CD4-positive, alpha-beta memory T cell (primary cell): ENCODE measurements at regions of chr20 and their contacts with region 1.

Region 1: DNA sequence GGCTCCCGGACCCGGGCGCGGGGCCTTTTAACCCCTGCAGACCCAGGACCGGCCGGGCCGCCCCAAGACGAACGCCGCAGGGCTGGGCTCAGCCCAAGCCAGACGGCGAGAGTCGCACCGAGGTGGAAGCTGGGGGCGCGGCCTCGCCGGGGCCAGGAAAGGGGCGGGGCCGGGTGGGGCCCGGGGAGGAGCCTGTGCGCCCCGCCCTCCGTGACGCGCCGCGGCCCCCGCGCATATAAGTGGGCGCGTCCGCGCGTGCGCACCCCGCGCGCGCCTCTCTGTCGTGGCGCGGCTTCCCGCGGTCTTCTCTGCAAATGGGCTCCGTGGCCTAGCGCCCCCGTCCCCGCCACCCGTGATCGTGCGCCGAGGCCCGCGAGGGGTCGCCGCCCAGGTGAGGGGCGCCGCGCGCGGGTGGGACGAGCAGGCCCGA is at the start of gene PPDPF:
- DNase-seq: peak; percentile 80 to 89 (median 83)
- H3K4me3 ChIP-seq: peak within 1 kb of the TSS; percentile 77 to 84
- H3K4me3 Mint-ChIP-seq: peak within 1 kb of the TSS; percentile 80 to 84 (median 82)
- H3K27ac ChIP-seq: peak within 1 kb of the TSS; percentile 74
- H3K27ac Mint-ChIP-seq: peak within 1 kb of the TSS; percentile 57 to 82 (median 74)
- H3K4me1 ChIP-seq: peaks cover 23% of the 10 kb centered on the region
- H3K4me1 Mint-ChIP-seq: peaks cover 6 to 28% (median 11%) of the 10 kb centered on the region in 4 donors
- H3K27me3 ChIP-seq: no peaks in the 10 kb centered on the region
- H3K27me3 Mint-ChIP-seq: no peaks in the 10 kb centered on the region
- total RNA-seq, gene PPDPF: 208 to 229 TPM

Region 2: DNA sequence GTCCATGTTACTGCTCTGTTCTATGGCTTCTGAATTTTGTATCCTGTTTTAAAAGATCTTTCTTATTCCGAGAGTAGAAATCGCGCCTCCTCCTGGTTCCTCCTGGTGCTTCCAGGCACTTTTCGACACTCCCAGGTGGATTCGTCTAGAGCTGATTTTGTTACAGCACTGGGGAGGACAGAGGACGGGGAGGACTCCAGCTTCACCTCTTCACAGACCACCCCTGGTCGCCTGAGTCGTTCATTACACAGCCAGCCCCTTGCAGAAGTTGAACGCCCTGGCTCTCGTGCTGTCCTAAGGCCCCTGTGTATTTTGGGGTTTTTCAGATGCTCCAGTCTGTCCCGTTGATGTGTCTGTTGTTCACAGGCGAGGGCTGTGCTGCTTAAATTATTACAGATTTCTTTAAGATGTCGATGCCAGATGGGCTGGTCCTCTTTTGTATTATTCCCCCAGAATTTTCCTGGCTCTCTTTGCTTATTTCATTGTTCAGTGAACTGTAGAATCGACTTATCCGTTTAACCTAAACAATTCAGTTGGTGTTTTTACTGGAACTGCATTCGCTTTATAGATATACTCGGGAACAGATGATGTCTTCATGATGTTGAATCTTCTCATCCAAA is 197.0 kb before region 1 on chr20:
- CTCF ChIA-PET with region 1: no interaction called
- POLR2A ChIA-PET with region 1: no interaction called
- intact Hi-C with region 1: no loop called
- DNase-seq: no peak
- H3K4me3 ChIP-seq: no peak overlapping the region
- H3K4me3 Mint-ChIP-seq: no peak overlapping the region
- H3K27ac ChIP-seq: no peak overlapping the region
- H3K27ac Mint-ChIP-seq: peak overlapping the region in 2 of 7 donors; percentile 29 to 31
- H3K4me1 ChIP-seq: peaks cover 13% of the 10 kb centered on the region
- H3K4me1 Mint-ChIP-seq: peaks cover 0 to 5% (median 1%) of the 10 kb centered on the region in 4 donors
- H3K27me3 ChIP-seq: no peaks in the 10 kb centered on the region
- H3K27me3 Mint-ChIP-seq: peaks cover 3% of the 10 kb centered on the region in 2 donors

Region 3: GRCh38 chr20:63495741-63496595 is 24.6 kb before region 1 on chr20:
- CTCF ChIA-PET with region 1: interaction called, 21 read pairs
- POLR2A ChIA-PET with region 1: interaction called, 27 read pairs
- intact Hi-C with region 1: loop called (anchors 1 kb)
- DNase-seq: peak; percentile 63 to 72 (median 68)
- H3K4me3 ChIP-seq: peak overlapping the region in 1 of 2 donors; percentile 43
- H3K4me3 Mint-ChIP-seq: peak overlapping the region in 7 of 8 donors; percentile 48 to 83 (median 71)
- H3K27ac ChIP-seq: no peak overlapping the region
- H3K27ac Mint-ChIP-seq: no peak overlapping the region
- H3K4me1 ChIP-seq: peaks cover 18% of the 10 kb centered on the region
- H3K4me1 Mint-ChIP-seq: peaks cover 1 to 8% (median 3%) of the 10 kb centered on the region in 4 donors
- H3K27me3 ChIP-seq: peaks cover 12% of the 10 kb centered on the region
- H3K27me3 Mint-ChIP-seq: peaks cover 5 to 9% of the 10 kb centered on the region in 2 donors

Region 4: DNA sequence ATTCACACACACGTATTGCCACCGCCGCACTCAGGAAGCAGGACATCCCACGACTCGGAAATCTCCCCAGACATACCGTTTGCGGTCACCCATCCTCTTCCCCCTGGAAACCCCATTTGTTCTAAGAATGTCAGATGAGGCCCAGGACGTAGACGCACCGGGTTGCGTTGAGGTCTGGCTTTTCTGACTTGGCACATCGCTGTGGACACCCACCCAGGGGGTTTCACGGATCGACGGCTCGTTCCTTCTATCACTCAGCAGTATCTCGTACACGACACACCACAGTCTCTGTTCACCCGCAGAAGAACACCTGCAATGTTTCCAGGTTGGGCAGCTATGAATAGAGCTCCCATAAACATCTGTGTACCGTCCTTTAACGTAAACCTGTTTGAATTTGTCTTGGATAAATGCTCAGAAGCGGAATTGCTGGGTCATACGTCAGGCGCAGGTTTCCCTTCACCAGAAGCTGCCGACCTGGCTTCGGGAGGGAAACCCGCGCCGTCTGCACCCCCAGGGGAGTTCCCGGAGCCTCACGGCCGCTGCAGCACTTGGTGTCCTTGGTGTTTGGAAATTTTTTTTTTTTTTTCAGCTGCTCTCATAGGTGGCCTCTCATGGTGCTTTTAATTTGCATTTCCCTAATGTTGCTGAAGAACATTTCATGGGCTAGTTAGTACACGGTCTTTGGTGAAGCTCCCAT is 12.3 kb before region 1 on chr20:
- CTCF ChIA-PET with region 1: no interaction called
- POLR2A ChIA-PET with region 1: no interaction called
- intact Hi-C with region 1: no loop called
- DNase-seq: no peak
- H3K4me3 ChIP-seq: no peak overlapping the region
- H3K4me3 Mint-ChIP-seq: peak overlapping the region in 3 of 8 donors; percentile 10 to 64 (median 35)
- H3K27ac ChIP-seq: no peak overlapping the region
- H3K27ac Mint-ChIP-seq: peak overlapping the region in 2 of 7 donors; percentile 48 to 52
- H3K4me1 ChIP-seq: no peaks in the 10 kb centered on the region
- H3K4me1 Mint-ChIP-seq: peaks cover 3 to 8% (median 5%) of the 10 kb centered on the region in 4 donors
- H3K27me3 ChIP-seq: no peaks in the 10 kb centered on the region
- H3K27me3 Mint-ChIP-seq: peaks cover 29 to 30% of the 10 kb centered on the region in 2 donors

Region 5: GRCh38 chr20:63553227-63553932 is 32.9 kb after region 1 on chr20:
- CTCF ChIA-PET with region 1: no interaction called
- POLR2A ChIA-PET with region 1: interaction called, 19 read pairs
- intact Hi-C with region 1: loop called (anchors 1 kb)
- DNase-seq: peak; percentile 87 to 93 (median 89)
- H3K4me3 ChIP-seq: peak overlapping the region; percentile 23 to 66
- H3K4me3 Mint-ChIP-seq: peak overlapping the region; percentile 68 to 92 (median 76)
- H3K27ac ChIP-seq: peak overlapping the region; percentile 69
- H3K27ac Mint-ChIP-seq: peak overlapping the region; percentile 93 to 98 (median 97)
- H3K4me1 ChIP-seq: peaks cover 22% of the 10 kb centered on the region
- H3K4me1 Mint-ChIP-seq: peaks cover 5 to 27% (median 14%) of the 10 kb centered on the region in 4 donors
- H3K27me3 ChIP-seq: no peaks in the 10 kb centered on the region
- H3K27me3 Mint-ChIP-seq: peaks cover 0 to 6% of the 10 kb centered on the region in 2 donors

Region 6: GRCh38 chr20:63567386-63568169 is 47.1 kb after region 1 on chr20:
- CTCF ChIA-PET with region 1: no interaction called
- POLR2A ChIA-PET with region 1: interaction called, 17 read pairs
- intact Hi-C with region 1: no loop called
- DNase-seq: peak; percentile 39 to 71 (median 57)
- H3K4me3 ChIP-seq: peak overlapping the region; percentile 42 to 68
- H3K4me3 Mint-ChIP-seq: peak overlapping the region; percentile 78 to 92 (median 84)
- H3K27ac ChIP-seq: peak overlapping the region; percentile 24
- H3K27ac Mint-ChIP-seq: peak overlapping the region in 5 of 7 donors; percentile 57 to 87 (median 60)
- H3K4me1 ChIP-seq: peaks cover 28% of the 10 kb centered on the region
- H3K4me1 Mint-ChIP-seq: peaks cover 6 to 31% (median 18%) of the 10 kb centered on the region in 4 donors
- H3K27me3 ChIP-seq: no peaks in the 10 kb centered on the region
- H3K27me3 Mint-ChIP-seq: no peaks in the 10 kb centered on the region

Region 7: DNA sequence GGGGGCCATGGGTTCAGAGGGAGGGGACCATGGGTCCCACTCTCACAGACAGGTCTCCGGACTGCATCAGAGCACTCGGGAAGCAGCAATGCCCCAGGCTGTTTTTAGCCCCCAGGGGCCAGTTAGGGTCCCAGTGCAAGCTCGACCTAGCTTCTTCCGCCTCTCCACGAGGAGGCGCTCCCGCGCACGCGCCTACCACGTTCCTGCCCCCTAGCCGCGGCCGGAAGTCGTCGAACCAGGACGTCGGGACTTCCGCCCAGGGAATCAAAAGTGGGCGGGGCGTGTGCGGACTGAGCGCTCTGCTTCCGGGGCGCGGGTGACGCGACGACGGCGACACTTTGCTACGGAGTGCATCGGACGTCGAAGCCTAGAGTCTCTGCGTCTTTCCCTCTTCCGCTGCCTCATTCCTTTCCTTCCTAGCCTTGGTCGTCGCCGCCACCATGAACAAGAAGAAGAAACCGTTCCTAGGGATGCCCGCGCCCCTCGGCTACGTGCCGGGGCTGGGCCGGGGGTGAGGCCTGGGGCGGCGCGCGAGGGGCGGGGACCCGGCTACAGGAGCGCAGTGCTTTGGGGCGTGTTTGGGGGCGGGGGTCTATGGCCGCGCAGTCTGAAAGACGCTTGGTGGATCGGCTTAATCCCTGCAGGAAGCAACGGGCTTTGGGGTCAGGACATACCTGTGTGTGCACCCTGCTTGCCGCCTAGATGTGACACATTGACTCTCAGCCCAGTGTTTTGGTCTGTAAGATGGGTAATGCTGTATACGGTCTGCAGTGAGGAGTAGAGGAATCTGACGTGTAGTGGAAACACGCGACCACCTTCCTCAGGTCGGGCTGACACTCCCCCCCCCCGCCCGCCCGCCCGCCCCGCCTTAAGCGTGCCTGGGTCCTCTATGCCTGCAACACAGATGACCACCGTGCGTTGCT is 460.5 kb after region 1 on chr20 and contains the start of gene PRPF6:
- CTCF ChIA-PET with region 1: interaction called, 3 read pairs
- POLR2A ChIA-PET with region 1: interaction called, 11 read pairs
- intact Hi-C with region 1: no loop called
- DNase-seq: peak; percentile 91 to 94 (median 94)
- H3K4me3 ChIP-seq: peak within 1 kb of the TSS; percentile 42 to 67
- H3K4me3 Mint-ChIP-seq: peak within 1 kb of the TSS; percentile 90 to 99 (median 93)
- H3K27ac ChIP-seq: peak within 1 kb of the TSS; percentile 69
- H3K27ac Mint-ChIP-seq: peak within 1 kb of the TSS; percentile 95 to 99 (median 98)
- H3K4me1 ChIP-seq: peaks cover 54% of the 10 kb centered on the region
- H3K4me1 Mint-ChIP-seq: peaks cover 48 to 72% (median 60%) of the 10 kb centered on the region in 4 donors
- H3K27me3 ChIP-seq: no peaks in the 10 kb centered on the region
- H3K27me3 Mint-ChIP-seq: no peaks in the 10 kb centered on the region
- total RNA-seq, gene PRPF6: 86.4 to 88.7 TPM